ENCODE measurements at regions of chr16 and their contacts with region 1.

Region 1: GRCh38 chr16:89217388-89218191 is at the start of gene ZNF778:
- DNase-seq: peak; percentile 73
- ATAC-seq: peak; percentile 84
- H3K4me3 ChIP-seq: peak within 1 kb of the TSS; percentile 88 to 93
- H3K27ac ChIP-seq: peak within 1 kb of the TSS; percentile 74
- H3K4me1 ChIP-seq: peaks cover 0 to 16% of the 10 kb centered on the region in 2 experiments; a peak in 3 of 4 replicates
- H3K27me3 ChIP-seq: no peaks in the 10 kb centered on the region
- CTCF ChIP-seq: no peak
- POLR2A ChIP-seq: peak; percentile 41
- RAD21 ChIP-seq: no peak; the same call in 1 of the 2 replicates
- total RNA-seq, gene ZNF778: 19.5 TPM

Region 2: GRCh38 chr16:88737298-88738150 is 480.1 kb before region 1 on chr16:
- CTCF ChIA-PET with region 1: interaction called, 6 read pairs
- POLR2A ChIA-PET with region 1: no interaction called
- RAD21 ChIA-PET with region 1: interaction called in 1 of 2 experiments, 3 read pairs
- intact Hi-C with region 1: loop called (anchors 5 kb)
- DNase-seq: peak; percentile 48
- ATAC-seq: peak; percentile 90
- H3K4me3 ChIP-seq: no peak overlapping the region
- H3K27ac ChIP-seq: peak overlapping the region; percentile 58; the same call in 1 of the 2 replicates
- H3K4me1 ChIP-seq: peaks cover 0 to 5% of the 10 kb centered on the region in 2 experiments; a peak in 1 of 4 replicates
- H3K27me3 ChIP-seq: no peaks in the 10 kb centered on the region
- CTCF ChIP-seq: peak; percentile 98 to 99 (median 99)
- POLR2A ChIP-seq: no peak
- RAD21 ChIP-seq: peak; percentile 79

Region 3: DNA sequence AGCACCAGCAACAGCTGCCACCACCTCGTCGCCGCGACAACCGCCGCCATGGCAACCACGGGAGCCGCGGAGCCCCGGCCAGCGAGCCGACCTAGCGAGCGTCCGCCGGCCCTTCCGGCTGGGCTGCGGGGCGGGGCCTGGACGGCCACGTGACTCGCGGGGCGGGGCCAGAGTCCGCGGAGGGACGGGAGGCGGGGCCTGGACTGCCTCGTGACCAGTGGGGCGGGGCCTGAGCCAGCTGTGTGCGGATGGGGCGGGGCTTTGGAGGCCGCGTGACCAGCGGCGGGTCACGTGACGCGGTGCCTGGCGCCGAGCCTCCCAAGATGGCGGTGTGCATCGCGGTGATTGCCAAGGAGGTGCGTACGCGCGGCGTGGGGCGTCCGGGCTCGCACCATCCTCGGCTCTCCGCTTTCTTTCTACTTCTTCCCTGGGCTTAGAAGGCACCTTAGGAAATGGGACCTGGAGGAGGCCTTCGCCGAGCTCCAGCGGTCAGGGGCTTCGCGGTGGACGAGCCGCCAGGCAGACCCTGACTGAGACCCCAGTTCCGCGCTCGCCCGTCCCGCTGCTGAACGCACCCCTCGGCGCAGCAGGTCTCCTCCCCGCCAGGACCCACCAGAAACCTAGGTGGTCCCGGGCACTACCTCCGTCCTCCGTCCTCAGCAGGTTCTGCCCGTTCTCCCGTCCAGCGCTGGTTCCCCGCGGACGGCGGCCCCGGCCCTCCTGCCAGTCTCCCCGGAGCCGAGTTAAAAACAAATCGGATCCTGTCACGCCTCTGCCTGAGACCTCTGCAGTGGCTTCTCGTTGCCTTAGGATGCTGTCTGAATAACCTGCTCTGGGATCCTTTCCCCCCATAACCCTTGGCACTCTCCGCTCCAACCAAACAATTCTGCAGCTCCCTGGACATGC is 360.5 kb before region 1 on chr16 and contains the starts of genes GALNS and TRAPPC2L:
- CTCF ChIA-PET with region 1: interaction called, 3 read pairs
- POLR2A ChIA-PET with region 1: no interaction called
- RAD21 ChIA-PET with region 1: no interaction called
- intact Hi-C with region 1: loop called (anchors 2 kb)
- DNase-seq: peak; percentile 90
- ATAC-seq: peak; percentile 87
- H3K4me3 ChIP-seq: peak within 1 kb of the TSS; percentile 89 to 100
- H3K27ac ChIP-seq: peak within 1 kb of the TSS; percentile 82
- H3K4me1 ChIP-seq: peaks cover 19 to 26% of the 10 kb centered on the region in 2 experiments
- H3K27me3 ChIP-seq: no peaks in the 10 kb centered on the region
- CTCF ChIP-seq: no peak
- POLR2A ChIP-seq: peak; percentile 89
- RAD21 ChIP-seq: no peak
- total RNA-seq, gene GALNS: 44.6 TPM
- total RNA-seq, gene TRAPPC2L: 94.1 TPM

Region 4: DNA sequence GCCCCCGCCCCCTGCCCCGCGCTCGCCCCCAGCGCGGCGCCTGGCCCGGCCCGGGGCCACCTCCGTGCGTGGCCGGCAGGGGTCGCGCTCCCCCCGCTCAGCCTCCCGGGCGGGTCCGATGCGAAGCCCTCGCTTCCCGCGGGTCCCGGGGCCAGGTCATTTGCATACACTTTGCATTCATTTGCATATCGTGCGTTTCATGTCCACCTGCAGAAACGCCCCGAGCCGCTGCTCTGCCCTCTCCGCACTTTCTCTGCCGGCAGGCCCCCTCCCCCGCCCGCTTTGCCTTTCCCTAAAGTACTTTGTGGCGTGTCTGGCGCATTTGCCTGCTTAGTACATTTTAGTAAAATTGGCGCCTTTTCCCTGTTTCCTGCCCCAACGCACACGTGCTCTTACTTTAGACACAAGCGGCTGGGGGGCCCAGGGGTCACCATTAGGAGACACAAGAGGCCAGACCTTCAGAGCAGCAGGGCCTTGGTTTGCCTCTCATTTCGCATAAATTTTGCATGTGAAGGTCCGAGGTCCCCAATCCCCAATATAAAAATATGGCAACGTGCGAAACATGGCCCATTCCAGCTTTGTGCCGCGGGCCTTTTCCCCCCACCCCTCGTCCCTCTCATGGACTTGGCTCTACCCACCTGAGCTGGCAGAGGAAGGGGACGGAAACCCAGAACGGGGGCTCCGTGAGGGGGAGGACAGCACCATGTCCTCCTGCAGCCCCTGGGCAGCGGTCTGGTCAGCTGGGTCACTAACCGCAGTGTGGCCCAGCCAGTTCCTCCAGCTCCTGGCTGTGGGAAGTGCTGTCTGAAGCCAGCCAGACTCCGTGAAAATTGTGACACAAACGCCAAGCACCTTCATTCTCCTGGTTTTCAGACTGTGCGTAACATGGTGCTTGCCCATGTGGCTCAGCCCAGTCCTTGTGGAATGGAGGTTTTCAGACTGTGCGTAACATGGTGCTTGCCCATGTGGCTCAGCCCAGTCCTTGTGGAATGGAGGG is 275.4 kb before region 1 on chr16:
- CTCF ChIA-PET with region 1: no interaction called
- POLR2A ChIA-PET with region 1: no interaction called
- RAD21 ChIA-PET with region 1: no interaction called
- intact Hi-C with region 1: loop called (anchors 2 kb)
- DNase-seq: peak; percentile 36
- ATAC-seq: peak; percentile 83
- H3K4me3 ChIP-seq: peak overlapping the region; percentile 5 to 29
- H3K27ac ChIP-seq: no peak overlapping the region
- H3K4me1 ChIP-seq: peaks cover 0 to 18% of the 10 kb centered on the region in 2 experiments; a peak in 2 of 4 replicates
- H3K27me3 ChIP-seq: no peaks in the 10 kb centered on the region
- CTCF ChIP-seq: peak; percentile 41 to 78 (median 51); a peak in 5 of 6 replicates
- POLR2A ChIP-seq: no peak
- RAD21 ChIP-seq: peak; percentile 75

Region 5: GRCh38 chr16:89171463-89172170 is 46.0 kb before region 1 on chr16 and contains the start of gene CDH15:
- CTCF ChIA-PET with region 1: interaction called, 5 read pairs
- POLR2A ChIA-PET with region 1: interaction called, 4 read pairs
- RAD21 ChIA-PET with region 1: interaction called in 1 of 2 experiments, 5 read pairs
- intact Hi-C with region 1: loop called (anchors 2 kb)
- DNase-seq: peak; percentile 98
- ATAC-seq: peak; percentile 90
- H3K4me3 ChIP-seq: peak within 1 kb of the TSS; percentile 38 to 54
- H3K27ac ChIP-seq: peak within 1 kb of the TSS; percentile 41; the same call in 1 of the 2 replicates
- H3K4me1 ChIP-seq: peaks cover 24 to 40% of the 10 kb centered on the region in 2 experiments
- H3K27me3 ChIP-seq: no peaks in the 10 kb centered on the region
- CTCF ChIP-seq: no peak
- POLR2A ChIP-seq: no peak
- RAD21 ChIP-seq: no peak
- total RNA-seq, gene CDH15: 3.8 TPM

Region 6: GRCh38 chr16:89289428-89290395 is 72.1 kb after region 1 on chr16:
- CTCF ChIA-PET with region 1: no interaction called
- POLR2A ChIA-PET with region 1: no interaction called
- RAD21 ChIA-PET with region 1: no interaction called
- intact Hi-C with region 1: loop called (anchors 2 kb)
- DNase-seq: peak; percentile 52
- ATAC-seq: peak; percentile 95
- H3K4me3 ChIP-seq: no peak overlapping the region
- H3K27ac ChIP-seq: peak overlapping the region; percentile 21; the same call in 1 of the 2 replicates
- H3K4me1 ChIP-seq: no peaks in the 10 kb centered on the region
- H3K27me3 ChIP-seq: no peaks in the 10 kb centered on the region
- CTCF ChIP-seq: peak; percentile 85 to 99 (median 99)
- POLR2A ChIP-seq: no peak
- RAD21 ChIP-seq: peak; percentile 81

Measured in HCT116 (cell line).